ENCODE measurements at regions of chrX and their contacts with region 1.

Region 1: DNA sequence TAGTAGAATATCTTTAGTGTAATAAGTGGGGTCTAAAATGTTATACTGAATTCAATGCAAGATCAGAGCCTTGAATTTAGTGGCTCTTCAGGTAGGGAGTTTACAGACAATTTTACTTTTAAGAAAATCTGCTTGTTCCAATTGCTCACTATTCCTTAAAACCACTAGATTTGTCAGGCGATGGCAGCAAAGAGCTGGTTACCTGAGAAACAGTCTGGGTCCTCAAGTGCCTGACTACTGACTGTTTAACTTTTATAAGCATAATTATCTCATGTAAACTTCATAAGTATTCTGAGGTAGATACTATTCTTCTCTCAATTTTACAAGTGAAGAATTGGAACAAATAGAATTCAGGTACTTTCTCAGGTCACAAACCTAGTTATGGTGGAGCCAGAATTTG is 84.3 kb downstream of the RRAGB start:
- DNase-seq: no peak
- H3K4me3 ChIP-seq: no peak overlapping the region
- H3K4me3 Mint-ChIP-seq: no peak overlapping the region
- H3K27ac Mint-ChIP-seq: no peak overlapping the region
- H3K4me1 ChIP-seq: no peaks in the 10 kb centered on the region
- H3K4me1 Mint-ChIP-seq: no peaks in the 10 kb centered on the region
- H3K27me3 ChIP-seq: no peaks in the 10 kb centered on the region
- H3K27me3 Mint-ChIP-seq: no peaks in the 10 kb centered on the region
- CTCF ChIP-seq: peak; percentile 6 to 18

Region 2: GRCh38 chrX:56248492-56248891 is 446.7 kb after region 1 on chrX:
- CTCF ChIA-PET with region 1: interaction called, 4 read pairs
- POLR2A ChIA-PET with region 1: no interaction called
- intact Hi-C with region 1: loop called (anchors 1 kb)
- DNase-seq: peak; percentile 41 to 58
- H3K4me3 ChIP-seq: no peak overlapping the region
- H3K4me3 Mint-ChIP-seq: no peak overlapping the region
- H3K27ac Mint-ChIP-seq: no peak overlapping the region
- H3K4me1 ChIP-seq: no peaks in the 10 kb centered on the region
- H3K4me1 Mint-ChIP-seq: no peaks in the 10 kb centered on the region
- H3K27me3 ChIP-seq: no peaks in the 10 kb centered on the region
- H3K27me3 Mint-ChIP-seq: no peaks in the 10 kb centered on the region
- CTCF ChIP-seq: peak; percentile 49 to 55